Panc1 (cell line): ENCODE measurements at regions of chr12 and their contacts with region 1.

Region 1: GRCh38 chr12:108562348-108563135 is at the start of gene ISCU:
- DNase-seq: peak; percentile 77
- ATAC-seq: peak; percentile 89
- H3K4me3 ChIP-seq: peak within 1 kb of the TSS; percentile 100
- H3K27ac ChIP-seq: peak within 1 kb of the TSS; percentile 99
- H3K4me1 ChIP-seq: peaks cover 35% of the 10 kb centered on the region
- H3K27me3 ChIP-seq: no peaks in the 10 kb centered on the region
- CTCF ChIP-seq: no peak
- total RNA-seq, gene ISCU: 66.1 TPM

Region 2: DNA sequence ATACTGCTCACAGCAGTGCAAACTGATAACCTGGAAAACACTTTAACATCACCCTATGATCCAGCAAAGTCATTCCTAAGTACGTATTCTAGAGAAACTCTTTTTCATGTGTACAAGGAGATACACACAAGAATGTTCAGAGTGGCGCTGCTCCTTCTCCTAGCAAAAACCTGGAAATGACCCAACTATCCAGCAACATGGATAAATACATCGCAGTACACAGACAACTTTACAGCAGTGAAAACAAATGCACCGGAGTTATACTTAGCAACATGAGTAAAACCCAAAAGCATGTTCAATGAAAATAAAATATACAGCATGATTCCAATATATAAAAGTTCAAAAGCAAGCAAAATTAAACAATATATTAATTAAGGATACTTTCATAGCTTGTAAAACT is 20.2 kb before region 1 on chr12:
- CTCF ChIA-PET with region 1: interaction called, 15 read pairs
- POLR2A ChIA-PET with region 1: interaction called, 7 read pairs
- in situ Hi-C with region 1: no loop called
- intact Hi-C with region 1: no loop called
- DNase-seq: no peak
- ATAC-seq: no peak
- H3K4me3 ChIP-seq: no peak overlapping the region
- H3K27ac ChIP-seq: no peak overlapping the region
- H3K4me1 ChIP-seq: no peaks in the 10 kb centered on the region
- H3K27me3 ChIP-seq: no peaks in the 10 kb centered on the region
- CTCF ChIP-seq: no peak

Region 3: GRCh38 chr12:108618079-108618952 is 55.8 kb after region 1 on chr12:
- CTCF ChIA-PET with region 1: interaction called, 17 read pairs
- POLR2A ChIA-PET with region 1: no interaction called
- in situ Hi-C with region 1: no loop called
- intact Hi-C with region 1: loop called (anchors 1 kb)
- DNase-seq: no peak
- ATAC-seq: peak; percentile 89
- H3K4me3 ChIP-seq: no peak overlapping the region
- H3K27ac ChIP-seq: no peak overlapping the region
- H3K4me1 ChIP-seq: peaks cover 13% of the 10 kb centered on the region
- H3K27me3 ChIP-seq: no peaks in the 10 kb centered on the region
- CTCF ChIP-seq: peak; percentile 98

Region 4: GRCh38 chr12:109093022-109093918 is 530.7 kb after region 1 on chr12 and contains the start of gene ALKBH2:
- CTCF ChIA-PET with region 1: no interaction called
- POLR2A ChIA-PET with region 1: no interaction called
- in situ Hi-C with region 1: no loop called
- intact Hi-C with region 1: loop called (anchors 5 kb)
- DNase-seq: peak; percentile 69
- ATAC-seq: peak; percentile 81
- H3K4me3 ChIP-seq: peak within 1 kb of the TSS; percentile 64 to 85
- H3K27ac ChIP-seq: peak within 1 kb of the TSS; percentile 97
- H3K4me1 ChIP-seq: peaks cover 18% of the 10 kb centered on the region
- H3K27me3 ChIP-seq: no peaks in the 10 kb centered on the region
- CTCF ChIP-seq: peak; percentile 99
- total RNA-seq, gene ALKBH2: 41.6 TPM